ENCODE measurements at regions of chr6 and their contacts with region 1.

Region 1: GRCh38 chr6:152380993-152381898 is 255.9 kb downstream of the SYNE1 start:
- DNase-seq: peak; percentile 85 to 90
- H3K4me3 ChIP-seq: peak overlapping the region; percentile 66 to 71
- H3K27ac ChIP-seq: peak overlapping the region; percentile 94 to 95
- H3K4me1 ChIP-seq: peaks cover 0 to 24% (median 0%) of the 10 kb centered on the region in 4 donors
- H3K27me3 ChIP-seq: no peaks in the 10 kb centered on the region
- CTCF ChIP-seq: no peak

Region 2: GRCh38 chr6:152399399-152399798 is 18.2 kb after region 1 on chr6:
- intact Hi-C with region 1: loop called (anchors 2 kb)
- DNase-seq: peak; percentile 63 to 78
- H3K4me3 ChIP-seq: peak overlapping the region in 1 of 2 donors; percentile 19
- H3K27ac ChIP-seq: peak overlapping the region; percentile 64 to 79
- H3K4me1 ChIP-seq: peaks cover 0 to 67% (median 25%) of the 10 kb centered on the region in 4 donors
- H3K27me3 ChIP-seq: no peaks in the 10 kb centered on the region
- CTCF ChIP-seq: no peak

Measured in tibial artery (tissue), 4 donors.